Pancreas (tissue), 10 donors: ENCODE measurements at regions of chr2 and their contacts with region 1.

Region 1: GRCh38 chr2:188506843-188507242 is 215.2 kb downstream of the GULP1 start:
- DNase-seq: no peak
- ATAC-seq: no peak
- H3K4me3 ChIP-seq: no peak overlapping the region
- H3K27ac ChIP-seq: no peak overlapping the region
- H3K4me1 ChIP-seq: peaks cover 0 to 15% (median 11%) of the 10 kb centered on the region in 3 donors
- H3K27me3 ChIP-seq: no peaks in the 10 kb centered on the region
- CTCF ChIP-seq: no peak

Region 2: GRCh38 chr2:187594801-187595200 is 912.0 kb before region 1 on chr2:
- intact Hi-C with region 1: loop called in 1 of 3 experiments (anchors 10 kb)
- DNase-seq: no peak
- ATAC-seq: no peak
- H3K4me3 ChIP-seq: no peak overlapping the region
- H3K27ac ChIP-seq: no peak overlapping the region
- H3K4me1 ChIP-seq: peaks cover 0 to 7% (median 0%) of the 10 kb centered on the region in 3 donors
- H3K27me3 ChIP-seq: no peaks in the 10 kb centered on the region
- CTCF ChIP-seq: no peak

Region 3: DNA sequence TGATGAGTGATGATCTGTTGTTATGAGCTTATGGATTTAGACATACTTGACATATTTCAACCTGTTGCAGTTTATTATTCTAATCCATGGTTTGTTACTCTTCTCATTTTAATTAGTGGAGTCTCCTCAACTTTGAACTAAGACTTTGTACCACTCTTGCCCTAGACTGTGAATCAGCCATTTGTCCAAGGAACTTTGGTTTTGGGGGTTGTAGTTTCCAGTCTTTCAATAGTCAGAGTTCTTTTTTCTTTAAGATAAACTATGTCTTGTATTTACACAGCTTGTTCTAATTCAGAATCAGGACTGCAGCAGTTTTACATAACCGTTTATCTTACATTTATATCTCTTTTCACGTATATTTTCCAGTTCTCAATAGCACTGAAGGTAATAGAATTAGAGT is 81.6 kb before region 1 on chr2:
- intact Hi-C with region 1: no loop called
- DNase-seq: no peak
- ATAC-seq: no peak
- H3K4me3 ChIP-seq: no peak overlapping the region
- H3K27ac ChIP-seq: no peak overlapping the region
- H3K4me1 ChIP-seq: no peaks in the 10 kb centered on the region
- H3K27me3 ChIP-seq: no peaks in the 10 kb centered on the region
- CTCF ChIP-seq: no peak